ENCODE measurements at regions of chr7 and their contacts with region 1.

Region 1: GRCh38 chr7:74289018-74289658 is at the start of gene CLIP2:
- DNase-seq: peak; percentile 67 to 90 (median 84)
- H3K4me3 ChIP-seq: peak within 1 kb of the TSS; percentile 67 to 97 (median 90)
- H3K27ac ChIP-seq: peak within 1 kb of the TSS; percentile 76 to 97 (median 92)
- H3K27me3 ChIP-seq: no peaks in the 10 kb centered on the region
- CTCF ChIP-seq: peak in 5 of 56 donors; percentile 5 to 19 (median 7)
- total RNA-seq, gene CLIP2: 111 to 263 (median 148) TPM

Region 2: GRCh38 chr7:74061840-74062539 is 227.1 kb before region 1 on chr7:
- intact Hi-C with region 1: loop called in 1 of 2 experiments (anchors 10 kb)
- DNase-seq: peak; percentile 44 to 85 (median 78)
- H3K4me3 ChIP-seq: peak overlapping the region in 54 of 59 donors; percentile 2 to 58 (median 36)
- H3K27ac ChIP-seq: peak overlapping the region in 58 of 59 donors; percentile 8 to 93 (median 81)
- H3K27me3 ChIP-seq: no peaks in the 10 kb centered on the region
- CTCF ChIP-seq: peak in 5 of 56 donors; percentile 13 to 16 (median 15)

Region 3: GRCh38 chr7:74121401-74122249 is 167.5 kb before region 1 on chr7:
- intact Hi-C with region 1: no loop called
- DNase-seq: no peak
- H3K4me3 ChIP-seq: no peak overlapping the region
- H3K27ac ChIP-seq: no peak overlapping the region
- H3K27me3 ChIP-seq: no peaks in the 10 kb centered on the region
- CTCF ChIP-seq: no peak

Region 4: GRCh38 chr7:74254129-74254857 is 34.8 kb before region 1 on chr7 and contains the start of gene RFC2:
- intact Hi-C with region 1: loop called (anchors 1 to 2 kb)
- DNase-seq: peak; percentile 93 to 100 (median 96)
- H3K4me3 ChIP-seq: peak within 1 kb of the TSS; percentile 67 to 99 (median 89)
- H3K27ac ChIP-seq: peak within 1 kb of the TSS; percentile 81 to 99 (median 95)
- H3K27me3 ChIP-seq: no peaks in the 10 kb centered on the region
- CTCF ChIP-seq: peak in 52 of 56 donors; percentile 12 to 72 (median 54)
- total RNA-seq, gene RFC2: 10.9 to 31.7 (median 19.3) TPM

Region 5: DNA sequence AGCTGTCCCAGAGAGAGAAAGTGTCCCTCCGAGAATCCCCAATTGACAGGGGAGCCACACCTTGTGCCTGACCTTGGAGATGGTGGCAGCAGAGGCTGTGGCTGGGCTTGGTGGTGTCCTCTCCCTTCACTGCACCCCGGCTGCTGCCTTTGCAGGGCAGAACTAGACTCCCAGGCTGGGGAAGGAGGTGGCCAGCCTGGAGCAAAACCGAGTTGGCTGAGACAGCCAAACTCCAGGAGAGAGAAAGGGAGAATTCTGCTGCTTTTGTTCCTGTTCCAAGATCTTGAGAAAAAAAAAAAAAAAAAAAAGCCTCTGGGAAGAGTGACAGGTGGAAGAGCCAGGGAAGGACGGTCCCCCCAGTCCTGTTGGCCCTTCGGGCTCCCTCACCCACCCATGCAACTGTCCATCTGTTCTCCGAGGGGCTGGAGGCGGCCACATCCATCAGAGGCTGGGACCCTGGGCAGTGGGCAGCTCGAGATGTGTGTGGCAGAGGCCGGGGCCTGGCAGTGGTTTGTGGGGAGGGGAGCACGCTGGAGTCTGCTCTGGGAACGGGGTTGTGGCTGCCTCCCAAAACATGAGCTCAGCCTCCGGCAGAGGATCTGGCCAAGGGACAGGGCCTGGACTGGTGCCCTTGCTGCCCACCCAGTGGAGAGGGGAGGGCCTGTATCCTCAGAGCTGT is 35.5 kb after region 1 on chr7:
- intact Hi-C with region 1: loop called in 1 of 2 experiments (anchors 5 kb)
- DNase-seq: peak; percentile 52 to 80 (median 71)
- H3K4me3 ChIP-seq: peak overlapping the region in 2 of 59 donors; percentile 5 to 13
- H3K27ac ChIP-seq: peak overlapping the region in 58 of 59 donors; percentile 2 to 87 (median 77)
- H3K27me3 ChIP-seq: no peaks in the 10 kb centered on the region
- CTCF ChIP-seq: no peak

Region 6: GRCh38 chr7:74395745-74396311 is 106.7 kb after region 1 on chr7:
- intact Hi-C with region 1: loop called in 1 of 2 experiments (anchors 2 kb)
- DNase-seq: no peak
- H3K4me3 ChIP-seq: no peak overlapping the region
- H3K27ac ChIP-seq: peak overlapping the region in 28 of 59 donors; percentile 3 to 96 (median 88)
- H3K27me3 ChIP-seq: no peaks in the 10 kb centered on the region
- CTCF ChIP-seq: no peak

Measured in dorsolateral prefrontal cortex (tissue), 120 donors.